ENCODE measurements at regions of chr13 and their contacts with region 1.

Region 1: DNA sequence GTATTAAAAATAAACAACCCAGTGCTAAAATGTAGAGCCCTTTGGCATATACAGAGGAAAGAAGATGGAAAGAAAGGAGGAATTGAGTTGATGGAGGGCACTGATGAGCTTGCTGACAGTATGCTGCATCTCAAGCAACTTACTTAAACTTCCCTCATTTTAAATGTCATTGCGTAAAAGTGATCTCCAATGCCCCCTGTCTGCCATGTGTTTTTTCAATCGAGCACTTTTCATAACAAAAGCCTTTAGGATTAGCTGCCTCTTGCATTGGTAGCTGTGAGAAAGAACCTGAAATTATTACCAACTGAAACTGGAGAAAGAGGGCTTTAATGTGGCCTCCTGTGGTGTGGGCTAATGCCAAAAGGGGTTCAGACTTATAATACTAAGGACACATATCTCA is 541.6 kb downstream of the SUCLA2 start:
- DNase-seq: peak; percentile 42
- ATAC-seq: no peak
- H3K4me3 ChIP-seq: no peak overlapping the region
- H3K27ac ChIP-seq: no peak overlapping the region
- H3K4me1 ChIP-seq: no peaks in the 10 kb centered on the region; the same call in 1 of the 2 replicates
- H3K27me3 ChIP-seq: no peaks in the 10 kb centered on the region
- CTCF ChIP-seq: peak; percentile 57

Region 2: DNA sequence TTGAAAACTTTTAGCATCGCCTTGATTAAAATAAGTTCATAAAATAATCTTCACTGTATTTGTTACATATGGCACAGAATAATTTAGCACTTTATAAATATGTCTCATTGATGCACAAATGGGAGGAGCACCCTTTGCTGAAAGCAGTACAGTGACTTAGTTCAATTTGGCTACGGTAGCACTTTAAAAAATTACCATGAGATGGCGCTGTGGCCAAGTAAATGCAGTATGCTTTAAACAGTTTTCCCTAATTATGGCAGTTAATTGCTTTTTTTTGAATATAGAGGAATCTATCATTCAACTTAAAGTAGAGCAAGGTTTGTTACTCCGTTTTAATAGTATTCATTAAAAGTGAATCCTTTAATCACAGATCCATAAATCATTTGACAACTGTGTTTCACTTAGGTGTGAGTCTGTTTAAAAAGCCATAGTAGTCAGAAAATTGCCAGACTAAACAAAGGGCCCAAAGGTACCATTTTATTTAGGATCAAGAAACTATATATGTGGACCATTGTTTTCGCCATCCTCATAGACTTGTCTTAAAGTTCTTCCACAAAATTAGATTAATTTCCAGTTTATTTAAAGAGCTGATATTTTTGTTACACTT is 627.8 kb before region 1 on chr13:
- CTCF ChIA-PET with region 1: no interaction called
- POLR2A ChIA-PET with region 1: no interaction called
- intact Hi-C with region 1: loop called (anchors 10 kb)
- DNase-seq: peak; percentile 71
- ATAC-seq: peak; percentile 54; the same call in 1 of the 2 replicates
- H3K4me3 ChIP-seq: no peak overlapping the region
- H3K27ac ChIP-seq: no peak overlapping the region
- H3K4me1 ChIP-seq: no peaks in the 10 kb centered on the region
- H3K27me3 ChIP-seq: no peaks in the 10 kb centered on the region
- CTCF ChIP-seq: peak; percentile 87

Region 3: GRCh38 chr13:46893798-46894560 is 565.5 kb before region 1 on chr13:
- CTCF ChIA-PET with region 1: interaction called, 5 read pairs
- POLR2A ChIA-PET with region 1: no interaction called
- intact Hi-C with region 1: loop called (anchors 5 kb)
- DNase-seq: peak; percentile 56
- ATAC-seq: peak; percentile 76
- H3K4me3 ChIP-seq: peak overlapping the region; percentile 83
- H3K27ac ChIP-seq: no peak overlapping the region
- H3K4me1 ChIP-seq: peaks cover 20% of the 10 kb centered on the region
- H3K27me3 ChIP-seq: no peaks in the 10 kb centered on the region
- CTCF ChIP-seq: peak; percentile 89

Region 4: GRCh38 chr13:46964789-46965527 is 494.6 kb before region 1 on chr13:
- CTCF ChIA-PET with region 1: interaction called, 3 read pairs
- POLR2A ChIA-PET with region 1: no interaction called
- intact Hi-C with region 1: loop called (anchors 5 kb)
- DNase-seq: peak; percentile 48
- ATAC-seq: peak; percentile 51
- H3K4me3 ChIP-seq: no peak overlapping the region
- H3K27ac ChIP-seq: peak overlapping the region; percentile 52
- H3K4me1 ChIP-seq: peaks cover 28% of the 10 kb centered on the region
- H3K27me3 ChIP-seq: no peaks in the 10 kb centered on the region
- CTCF ChIP-seq: no peak

Region 5: DNA sequence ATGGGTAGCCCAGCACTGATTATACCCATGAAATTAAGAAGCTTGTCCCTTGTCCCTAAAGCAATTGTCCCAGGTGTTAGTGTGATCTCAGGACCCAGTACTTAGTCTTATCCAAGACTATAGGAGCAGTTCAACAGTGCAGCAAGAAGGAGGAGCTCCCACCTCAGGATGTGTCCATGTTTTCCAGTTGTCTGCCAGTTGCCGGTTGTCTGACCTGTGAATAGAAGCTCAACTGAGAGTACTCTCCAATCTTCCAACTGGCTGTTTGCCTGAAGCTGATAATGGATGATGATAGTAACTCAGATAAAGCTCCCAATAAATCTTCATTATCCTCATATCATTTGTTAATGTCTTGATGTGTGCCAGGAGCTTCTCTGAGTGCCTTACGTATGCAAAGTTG is 455.5 kb before region 1 on chr13:
- CTCF ChIA-PET with region 1: no interaction called
- POLR2A ChIA-PET with region 1: no interaction called
- intact Hi-C with region 1: loop called (anchors 10 kb)
- DNase-seq: peak; percentile 11
- ATAC-seq: no peak
- H3K4me3 ChIP-seq: no peak overlapping the region
- H3K27ac ChIP-seq: no peak overlapping the region
- H3K4me1 ChIP-seq: peaks cover 11% of the 10 kb centered on the region
- H3K27me3 ChIP-seq: no peaks in the 10 kb centered on the region
- CTCF ChIP-seq: 0 out of 2 replicates have a peak, but pooled peaks have one; percentile 16

Region 6: DNA sequence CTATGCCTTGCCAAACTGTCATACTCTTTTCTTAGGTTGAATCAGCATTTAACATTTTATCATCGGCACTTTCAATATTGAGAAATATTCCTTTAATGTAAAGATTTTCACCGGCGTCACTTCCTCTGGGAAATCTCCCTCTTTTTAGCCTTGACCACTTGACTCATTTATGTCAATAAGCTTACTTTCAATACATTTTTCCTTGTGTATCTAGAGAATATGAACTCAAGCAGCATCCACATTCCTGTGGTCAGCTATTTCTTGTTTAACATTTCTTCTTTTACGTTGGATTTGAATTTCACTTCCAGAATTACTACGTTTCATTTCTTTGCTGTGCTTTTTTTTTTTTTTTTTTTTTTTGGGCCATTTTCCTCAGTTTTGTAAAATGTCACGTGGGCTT is 291.4 kb before region 1 on chr13:
- CTCF ChIA-PET with region 1: no interaction called
- POLR2A ChIA-PET with region 1: no interaction called
- intact Hi-C with region 1: loop called (anchors 10 kb)
- DNase-seq: peak; percentile 78
- ATAC-seq: peak; percentile 94
- H3K4me3 ChIP-seq: peak overlapping the region; percentile 63
- H3K27ac ChIP-seq: peak overlapping the region; percentile 95
- H3K4me1 ChIP-seq: peaks cover 21% of the 10 kb centered on the region
- H3K27me3 ChIP-seq: no peaks in the 10 kb centered on the region
- CTCF ChIP-seq: no peak

Region 7: GRCh38 chr13:47287291-47287751 is 172.2 kb before region 1 on chr13:
- CTCF ChIA-PET with region 1: no interaction called
- POLR2A ChIA-PET with region 1: no interaction called
- intact Hi-C with region 1: loop called (anchors 5 kb)
- DNase-seq: peak; percentile 78
- ATAC-seq: peak; percentile 81
- H3K4me3 ChIP-seq: no peak overlapping the region
- H3K27ac ChIP-seq: peak overlapping the region; percentile 86
- H3K4me1 ChIP-seq: peaks cover 56% of the 10 kb centered on the region
- H3K27me3 ChIP-seq: no peaks in the 10 kb centered on the region
- CTCF ChIP-seq: no peak

Measured in PC-3 (cell line).